ENCODE measurements at regions of chr2 and their contacts with region 1.

Region 1: GRCh38 chr2:56183643-56184499 is at the start of gene CCDC85A:
- DNase-seq: peak; percentile 83
- H3K4me3 ChIP-seq: peak within 1 kb of the TSS; percentile 25 to 72 (median 57)
- H3K27ac ChIP-seq: peak within 1 kb of the TSS; percentile 1 to 41 (median 24)
- H3K4me1 ChIP-seq: peaks cover 6 to 25% (median 20%) of the 10 kb centered on the region in 4 donors
- H3K27me3 ChIP-seq: peaks cover 76% of the 10 kb centered on the region
- CTCF ChIP-seq: peak; percentile 73 to 90 (median 88)
- EP300 ChIP-seq: no peak
- POLR2A ChIP-seq: no peak
- total RNA-seq, gene CCDC85A: 0.20 to 1.1 (median 0.92) TPM

Region 2: GRCh38 chr2:55693181-55694134 is 490.4 kb before region 1 on chr2 and contains the start of gene PNPT1:
- in situ Hi-C with region 1: no loop called
- intact Hi-C with region 1: no loop called
- DNase-seq: peak; percentile 94
- H3K4me3 ChIP-seq: peak within 1 kb of the TSS; percentile 27 to 77 (median 55)
- H3K27ac ChIP-seq: peak within 1 kb of the TSS; percentile 2 to 66 (median 36)
- H3K4me1 ChIP-seq: peaks cover 0 to 17% (median 13%) of the 10 kb centered on the region in 4 donors
- H3K27me3 ChIP-seq: no peaks in the 10 kb centered on the region
- CTCF ChIP-seq: peak in 1 of 5 experiments; percentile 10
- EP300 ChIP-seq: no peak
- POLR2A ChIP-seq: peak; percentile 57
- total RNA-seq, gene PNPT1: 2.2 to 14.9 (median 9.1) TPM

Region 3: DNA sequence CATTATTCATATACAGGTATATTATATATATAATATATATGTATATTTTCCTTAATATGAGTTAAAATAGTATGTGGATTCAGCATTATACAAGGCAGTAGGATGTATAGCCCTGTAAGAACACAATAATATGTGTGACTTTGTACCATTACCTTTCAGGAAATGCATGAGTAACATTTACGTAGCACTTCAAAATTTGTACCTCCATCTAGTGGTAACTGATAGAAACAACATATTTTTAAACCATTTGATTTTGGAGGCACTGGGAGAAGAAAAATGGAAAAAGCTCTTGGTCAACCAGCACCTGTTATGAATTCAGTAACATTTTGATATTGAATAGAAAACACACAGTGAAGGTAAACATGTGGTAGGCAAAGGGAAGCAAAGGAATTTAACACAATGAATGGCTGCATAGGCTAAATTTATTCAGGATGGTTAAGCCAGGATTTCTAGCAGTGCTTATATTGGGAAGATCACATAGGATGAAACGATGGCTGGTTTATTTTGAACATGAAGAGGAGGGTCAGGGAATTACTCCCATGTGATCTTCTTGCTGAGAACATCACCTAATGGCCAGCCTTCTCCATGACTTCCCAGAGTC is 565.4 kb after region 1 on chr2:
- in situ Hi-C with region 1: loop called in 3 of 4 experiments (anchors 10 to 25 kb)
- intact Hi-C with region 1: no loop called
- DNase-seq: no peak
- H3K4me3 ChIP-seq: no peak overlapping the region
- H3K27ac ChIP-seq: no peak overlapping the region
- H3K4me1 ChIP-seq: no peaks in the 10 kb centered on the region
- H3K27me3 ChIP-seq: no peaks in the 10 kb centered on the region
- CTCF ChIP-seq: peak; percentile 31 to 50 (median 37)
- EP300 ChIP-seq: no peak
- POLR2A ChIP-seq: no peak

Region 4: GRCh38 chr2:57516698-57517340 is 1332.9 kb after region 1 on chr2:
- in situ Hi-C with region 1: loop called in 3 of 4 experiments (anchors 25 kb)
- intact Hi-C with region 1: no loop called
- DNase-seq: no peak
- H3K4me3 ChIP-seq: no peak overlapping the region
- H3K27ac ChIP-seq: no peak overlapping the region
- H3K4me1 ChIP-seq: no peaks in the 10 kb centered on the region
- H3K27me3 ChIP-seq: no peaks in the 10 kb centered on the region
- CTCF ChIP-seq: peak; percentile 35 to 60 (median 55)
- EP300 ChIP-seq: no peak
- POLR2A ChIP-seq: no peak